ENCODE measurements at regions of chr11 and their contacts with region 1.

Region 1: GRCh38 chr11:30635401-30635989 is 49.3 kb upstream of the MPPED2 start:
- DNase-seq: peak; percentile 53 to 95 (median 79)
- H3K4me3 ChIP-seq: peak overlapping the region in 58 of 59 donors; percentile 11 to 67 (median 47)
- H3K27ac ChIP-seq: peak overlapping the region in 1 of 59 donors; percentile 42
- H3K27me3 ChIP-seq: peaks cover 0 to 5% (median 0%) of the 10 kb centered on the region in 45 donors
- CTCF ChIP-seq: no peak

Region 2: GRCh38 chr11:30358536-30358935 is 277.0 kb before region 1 on chr11:
- intact Hi-C with region 1: loop called in 1 of 2 experiments (anchors 10 kb)
- DNase-seq: peak in 3 of 10 donors; percentile 44 to 62 (median 47)
- H3K4me3 ChIP-seq: no peak overlapping the region
- H3K27ac ChIP-seq: no peak overlapping the region
- H3K27me3 ChIP-seq: peaks cover 0 to 5% (median 0%) of the 10 kb centered on the region in 45 donors
- CTCF ChIP-seq: no peak

Measured in dorsolateral prefrontal cortex (tissue), 120 donors.